ENCODE measurements at regions of chr9 and their contacts with region 1.

Region 1: DNA sequence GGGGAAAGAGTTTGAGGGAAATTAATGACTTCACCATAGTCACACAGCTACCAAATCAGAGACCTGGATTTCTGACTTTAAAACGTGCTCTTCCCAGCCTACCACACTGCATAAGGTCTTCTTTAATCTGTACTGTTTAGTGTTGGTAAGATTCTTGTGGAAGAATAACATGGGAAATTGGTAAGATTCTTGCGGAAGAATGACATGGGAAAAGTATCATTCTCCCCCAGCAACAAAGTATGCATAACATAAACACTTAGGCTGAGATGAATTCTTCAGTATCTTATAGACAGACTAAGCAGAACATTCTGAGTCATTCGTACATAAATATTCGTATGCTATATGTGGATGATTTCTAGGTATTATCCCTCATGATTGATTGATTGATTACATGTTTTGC is 170.4 kb downstream of the FOCAD start:
- DNase-seq: no peak
- H3K4me3 Mint-ChIP-seq: no peak overlapping the region
- H3K27ac Mint-ChIP-seq: no peak overlapping the region
- H3K4me1 Mint-ChIP-seq: peaks cover 2% of the 10 kb centered on the region
- H3K27me3 Mint-ChIP-seq: no peaks in the 10 kb centered on the region

Region 2: GRCh38 chr9:20835364-20836286 is 18.8 kb before region 1 on chr9:
- CTCF ChIA-PET with region 1: no interaction called
- intact Hi-C with region 1: no loop called
- DNase-seq: no peak
- H3K4me3 Mint-ChIP-seq: no peak overlapping the region
- H3K27ac Mint-ChIP-seq: no peak overlapping the region
- H3K4me1 Mint-ChIP-seq: peaks cover 7% of the 10 kb centered on the region
- H3K27me3 Mint-ChIP-seq: no peaks in the 10 kb centered on the region

Region 3: GRCh38 chr9:20914556-20914955 is 60.1 kb after region 1 on chr9:
- CTCF ChIA-PET with region 1: no interaction called
- intact Hi-C with region 1: loop called (anchors 10 kb)
- DNase-seq: no peak
- H3K4me3 Mint-ChIP-seq: no peak overlapping the region
- H3K27ac Mint-ChIP-seq: no peak overlapping the region
- H3K4me1 Mint-ChIP-seq: no peaks in the 10 kb centered on the region
- H3K27me3 Mint-ChIP-seq: no peaks in the 10 kb centered on the region

Measured in activated naive CD4-positive, alpha-beta T cell treated with anti-CD3 and anti-CD28 coated beads for 36 hours (primary cell).